Gastrocnemius medialis (tissue), 4 donors: ENCODE measurements at regions of chr12 and their contacts with region 1.

Region 1: DNA sequence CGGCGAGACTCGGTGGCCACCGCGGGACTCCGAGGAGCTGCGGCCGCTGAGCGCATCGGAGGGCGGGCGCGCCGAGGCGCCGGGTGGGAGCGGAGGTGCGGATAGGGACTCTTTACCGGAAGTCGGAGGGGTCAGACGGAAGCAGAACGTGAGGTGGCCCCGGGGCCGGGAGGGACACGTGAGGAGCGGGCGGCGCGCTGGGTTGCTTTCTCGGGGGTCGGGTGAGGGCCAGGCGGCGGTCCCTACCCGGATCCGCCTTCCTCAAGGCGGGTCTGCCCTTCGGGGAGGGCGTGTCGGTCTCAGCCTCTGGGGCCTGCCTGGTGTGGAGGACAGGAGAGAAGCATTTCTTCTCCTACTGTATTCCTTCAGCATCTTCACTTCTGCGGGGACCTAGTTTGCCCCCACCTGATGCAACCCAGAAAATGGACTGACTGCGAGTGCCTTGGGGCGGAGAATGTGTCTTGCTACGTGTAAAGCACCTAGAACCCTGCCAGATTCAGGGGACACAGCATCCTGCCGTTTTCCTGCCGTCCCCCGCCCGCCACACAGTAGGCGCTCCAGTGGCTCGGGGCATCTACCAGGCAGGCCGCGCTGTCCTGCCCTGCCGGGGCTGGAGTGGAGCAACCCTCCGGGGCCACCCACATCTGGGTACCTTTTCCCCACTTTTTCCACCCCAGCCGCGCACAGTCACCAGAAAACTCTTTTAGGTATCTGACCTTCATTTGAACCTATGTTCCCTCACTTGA is 517 bp upstream of the ATXN2 start:
- DNase-seq: peak; percentile 81 to 85
- ATAC-seq: peak; percentile 79
- H3K4me3 ChIP-seq: peak overlapping the region; percentile 76 to 91 (median 82)
- H3K27ac ChIP-seq: peak overlapping the region; percentile 92 to 98 (median 95)
- H3K4me1 ChIP-seq: peaks cover 34% of the 10 kb centered on the region in 2 donors
- H3K27me3 ChIP-seq: no peaks in the 10 kb centered on the region
- CTCF ChIP-seq: peak in 1 of 5 experiments; percentile 24
- POLR2A ChIP-seq: peak; percentile 81 to 88

Region 2: DNA sequence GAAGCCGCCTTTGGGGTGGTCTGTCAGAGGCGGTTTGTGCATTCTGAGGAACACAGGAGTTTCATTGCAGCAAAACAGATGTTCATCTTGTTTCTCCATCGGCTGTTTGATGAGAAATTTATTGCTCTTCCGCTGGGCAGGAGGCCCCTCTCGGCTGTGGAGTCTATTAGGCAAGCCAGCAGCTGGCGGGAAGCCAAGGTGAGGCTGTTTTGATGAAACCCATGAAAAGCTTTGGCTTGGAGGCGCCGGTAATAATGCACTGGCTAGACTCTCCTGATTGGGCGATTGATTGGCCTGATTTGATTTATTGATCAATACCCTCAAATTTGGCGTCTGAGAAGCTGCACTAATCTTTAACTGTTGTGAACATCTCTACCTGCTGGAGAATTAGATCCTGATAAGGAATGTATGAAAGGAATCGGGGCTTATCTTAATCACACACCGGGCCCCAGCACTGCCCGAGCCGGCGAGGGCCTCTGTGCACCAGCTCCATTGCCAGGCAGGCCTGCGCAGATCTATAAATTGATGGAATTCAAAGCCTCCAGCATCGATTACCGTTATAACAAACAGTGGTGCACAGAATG is 418.4 kb before region 1 on chr12:
- in situ Hi-C with region 1: no loop called
- intact Hi-C with region 1: no loop called
- DNase-seq: peak; percentile 27 to 52
- ATAC-seq: no peak
- H3K4me3 ChIP-seq: no peak overlapping the region
- H3K27ac ChIP-seq: no peak overlapping the region
- H3K4me1 ChIP-seq: no peaks in the 10 kb centered on the region
- H3K27me3 ChIP-seq: peaks cover 3 to 21% (median 11%) of the 10 kb centered on the region in 3 donors
- CTCF ChIP-seq: no peak
- POLR2A ChIP-seq: no peak

Region 3: GRCh38 chr12:111368788-111369495 is 230.7 kb before region 1 on chr12 and contains the start of gene PHETA1:
- in situ Hi-C with region 1: no loop called
- intact Hi-C with region 1: loop called (anchors 1 kb)
- DNase-seq: peak; percentile 91 to 92
- ATAC-seq: peak; percentile 90 to 95
- H3K4me3 ChIP-seq: peak within 1 kb of the TSS; percentile 80 to 98 (median 90)
- H3K27ac ChIP-seq: peak within 1 kb of the TSS; percentile 66 to 89 (median 79)
- H3K4me1 ChIP-seq: peaks cover 12 to 19% of the 10 kb centered on the region in 2 donors
- H3K27me3 ChIP-seq: no peaks in the 10 kb centered on the region
- CTCF ChIP-seq: no peak
- POLR2A ChIP-seq: peak; percentile 63 to 74
- total RNA-seq, gene PHETA1: 8.7 to 16.7 (median 14.5) TPM

Region 4: DNA sequence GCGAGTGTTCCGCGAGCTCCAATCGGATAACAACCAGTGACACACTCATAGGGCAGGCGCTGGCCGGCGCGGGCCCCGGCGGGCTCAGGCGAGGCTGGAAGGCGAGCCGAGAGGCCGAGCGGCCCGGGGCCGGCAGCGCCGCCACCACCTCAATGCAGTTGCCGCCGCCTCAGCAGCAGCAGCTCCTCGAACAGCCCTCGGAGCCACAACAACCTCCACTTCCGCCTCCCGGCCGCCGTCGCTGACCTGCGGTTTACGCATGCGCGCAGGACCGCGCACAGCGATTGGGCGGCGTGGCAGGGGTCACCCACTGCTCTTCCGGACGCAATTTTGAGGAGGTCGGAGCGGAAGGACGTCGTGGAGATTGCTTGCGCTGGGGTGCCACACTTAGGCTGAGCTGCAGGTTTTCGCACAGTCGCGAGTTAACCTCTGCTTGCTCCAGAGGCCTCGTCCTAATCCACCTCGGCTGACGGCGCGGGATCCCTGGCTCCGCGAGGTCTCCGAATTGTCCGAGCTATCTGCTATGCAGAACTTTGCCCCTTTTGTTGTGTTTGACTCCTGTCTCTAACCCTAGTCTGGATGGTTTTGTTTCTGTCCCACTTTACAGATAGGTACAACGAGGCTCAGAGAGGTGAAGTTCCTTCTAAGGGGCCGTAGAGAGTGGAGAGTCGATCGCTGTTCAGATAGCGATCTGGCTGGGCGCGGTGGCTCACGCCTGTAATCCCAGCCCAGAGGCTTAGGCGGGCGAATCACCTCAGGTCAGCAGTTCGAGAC is 86.3 kb after region 1 on chr12 and contains the starts of genes ACAD10 and BRAP:
- in situ Hi-C with region 1: no loop called
- intact Hi-C with region 1: loop called (anchors 5 kb)
- DNase-seq: peak; percentile 85 to 94
- ATAC-seq: peak; percentile 96 to 98
- H3K4me3 ChIP-seq: peak within 1 kb of the TSS; percentile 75 to 91 (median 82)
- H3K27ac ChIP-seq: peak within 1 kb of the TSS; percentile 82 to 95 (median 88)
- H3K4me1 ChIP-seq: peaks cover 26% of the 10 kb centered on the region in 2 donors
- H3K27me3 ChIP-seq: no peaks in the 10 kb centered on the region
- CTCF ChIP-seq: no peak
- POLR2A ChIP-seq: peak; percentile 74 to 87
- total RNA-seq, gene ACAD10: 8.3 to 12.6 (median 11.7) TPM
- total RNA-seq, gene BRAP: 25.2 to 38.5 (median 29.2) TPM